GM12878 (cell line): ENCODE measurements at regions of chr15 and their contacts with region 1.

Region 1: DNA sequence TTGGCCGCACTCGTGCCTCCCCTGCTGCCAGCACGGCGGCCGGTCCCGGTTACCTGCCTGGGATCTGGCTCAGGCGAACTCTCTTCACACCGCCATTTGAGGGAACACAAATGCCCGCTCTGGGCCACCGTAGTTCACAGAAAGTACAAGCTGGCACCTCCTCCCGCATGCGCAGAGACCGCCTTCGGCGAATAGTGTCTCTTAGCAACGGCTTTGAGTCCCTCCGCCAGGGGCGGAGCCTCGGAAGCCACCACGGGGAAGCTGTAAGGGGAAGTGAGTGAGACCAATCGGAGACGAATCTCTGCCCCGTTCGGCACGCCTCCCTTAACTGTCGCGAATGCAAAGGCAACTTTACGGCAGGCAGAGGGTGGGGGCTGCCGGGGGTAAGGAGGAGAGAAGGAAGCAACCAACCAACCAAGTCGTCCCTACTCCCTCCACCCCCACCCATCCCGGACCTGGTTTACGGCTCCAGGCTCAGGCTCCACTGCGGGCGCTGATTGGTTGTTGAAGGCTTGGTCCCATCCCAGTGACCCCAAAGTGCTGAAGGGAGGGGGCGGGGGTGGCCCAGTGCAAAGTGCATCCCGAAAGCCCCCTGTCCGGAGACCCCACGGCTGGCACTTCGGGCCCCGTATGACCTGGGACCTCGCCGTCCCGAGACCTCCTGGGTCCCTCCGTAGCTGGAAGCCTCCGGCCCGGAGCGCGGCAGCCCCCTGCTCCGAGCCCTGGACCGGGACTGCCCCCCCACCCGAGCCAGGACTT is at the starts of genes ASB7 and LINS1:
- DNase-seq: peak; percentile 100
- ATAC-seq: peak; percentile 94
- H3K4me3 ChIP-seq: peak within 1 kb of the TSS; percentile 99
- H3K27ac ChIP-seq: peak within 1 kb of the TSS; percentile 83
- H3K4me1 ChIP-seq: peaks cover 15% of the 10 kb centered on the region
- H3K27me3 ChIP-seq: no peaks in the 10 kb centered on the region
- CTCF ChIP-seq: no peak
- EP300 ChIP-seq: no peak
- POLR2A ChIP-seq: no peak; the same call in none of the 2 replicates
- RAD21 ChIP-seq: no peak
- polyA plus RNA-seq, gene ASB7: 2.7 to 2.8 TPM
- polyA plus RNA-seq, gene LINS1: 15.1 to 28.4 TPM

Region 2: GRCh38 chr15:99250494-99251435 is 1351.5 kb before region 1 on chr15:
- CTCF ChIA-PET with region 1: no interaction called
- POLR2A ChIA-PET with region 1: no interaction called
- RAD21 ChIA-PET with region 1: no interaction called
- SMC1A ChIA-PET with region 1: no interaction called
- in situ Hi-C with region 1: loop called (anchors 25 kb)
- intact Hi-C with region 1: no loop called
- DNase-seq: peak; percentile 99
- ATAC-seq: peak; percentile 91
- H3K4me3 ChIP-seq: peak overlapping the region; percentile 75
- H3K27ac ChIP-seq: peak overlapping the region; percentile 84
- H3K4me1 ChIP-seq: peaks cover 11% of the 10 kb centered on the region
- H3K27me3 ChIP-seq: no peaks in the 10 kb centered on the region
- CTCF ChIP-seq: no peak
- EP300 ChIP-seq: no peak
- POLR2A ChIP-seq: peak; percentile 88
- RAD21 ChIP-seq: no peak

Region 3: GRCh38 chr15:100627789-100628395 is 25.6 kb after region 1 on chr15:
- CTCF ChIA-PET with region 1: interaction called, 11 read pairs
- POLR2A ChIA-PET with region 1: no interaction called
- RAD21 ChIA-PET with region 1: interaction called, 5 read pairs
- SMC1A ChIA-PET with region 1: interaction called, 3 read pairs
- in situ Hi-C with region 1: no loop called
- intact Hi-C with region 1: no loop called
- DNase-seq: peak; percentile 43
- ATAC-seq: peak; percentile 92
- H3K4me3 ChIP-seq: no peak overlapping the region
- H3K27ac ChIP-seq: no peak overlapping the region
- H3K4me1 ChIP-seq: no peaks in the 10 kb centered on the region
- H3K27me3 ChIP-seq: no peaks in the 10 kb centered on the region
- CTCF ChIP-seq: peak; percentile 73 to 86 (median 80); a peak in 5 of 6 replicates
- EP300 ChIP-seq: no peak
- POLR2A ChIP-seq: no peak
- RAD21 ChIP-seq: peak; percentile 73

Region 4: GRCh38 chr15:101294731-101295606 is 692.7 kb after region 1 on chr15 and contains the start of gene SNRPA1:
- CTCF ChIA-PET with region 1: no interaction called
- POLR2A ChIA-PET with region 1: no interaction called
- RAD21 ChIA-PET with region 1: no interaction called
- SMC1A ChIA-PET with region 1: no interaction called
- in situ Hi-C with region 1: no loop called
- intact Hi-C with region 1: loop called (anchors 2 kb)
- DNase-seq: peak; percentile 68
- ATAC-seq: peak; percentile 88
- H3K4me3 ChIP-seq: peak within 1 kb of the TSS; percentile 87
- H3K27ac ChIP-seq: peak within 1 kb of the TSS; percentile 95
- H3K4me1 ChIP-seq: peaks cover 8% of the 10 kb centered on the region
- H3K27me3 ChIP-seq: no peaks in the 10 kb centered on the region
- CTCF ChIP-seq: no peak
- EP300 ChIP-seq: 0 out of 4 replicates have a peak, but pooled peaks of 1 of the 2 experiments have one; percentile 7
- POLR2A ChIP-seq: peak; percentile 95
- RAD21 ChIP-seq: no peak
- polyA plus RNA-seq, gene SNRPA1: 174 to 238 TPM

Region 5: DNA sequence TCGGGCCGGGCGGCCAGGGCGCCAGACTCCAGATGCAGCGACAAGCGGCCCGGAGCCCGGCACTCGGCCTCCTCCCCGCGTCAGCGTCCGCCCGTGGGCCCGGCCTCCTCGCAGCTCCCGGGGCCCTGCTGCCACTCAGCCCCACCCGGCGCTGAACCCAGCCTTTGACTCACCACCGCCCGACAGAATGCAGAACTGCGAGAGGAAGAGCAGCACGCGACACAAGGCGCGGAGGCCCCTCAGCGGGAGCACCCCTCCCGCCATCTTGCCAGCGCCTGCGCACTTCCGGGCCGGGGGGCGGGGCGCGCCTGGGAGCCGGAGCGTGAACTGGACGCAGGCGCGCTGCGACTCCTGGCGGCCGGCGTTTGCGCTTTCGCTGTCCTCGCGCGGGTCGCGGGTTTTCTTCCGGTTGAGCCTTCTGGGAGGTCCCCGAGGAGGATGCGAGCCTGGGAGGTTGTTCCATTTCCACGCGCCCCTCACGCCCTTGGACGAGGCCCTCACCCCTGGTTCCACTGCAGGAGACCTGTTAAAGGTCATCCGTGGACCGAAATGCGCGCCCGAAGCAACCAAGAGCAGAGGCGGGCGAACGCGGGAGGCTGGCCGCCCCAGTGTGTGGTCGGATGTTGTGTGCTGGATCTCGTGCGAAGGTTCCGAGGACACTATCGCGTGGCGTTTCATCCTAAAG is 1050.0 kb after region 1 on chr15 and contains the start of gene TM2D3:
- CTCF ChIA-PET with region 1: no interaction called
- POLR2A ChIA-PET with region 1: no interaction called
- RAD21 ChIA-PET with region 1: no interaction called
- SMC1A ChIA-PET with region 1: no interaction called
- in situ Hi-C with region 1: no loop called
- intact Hi-C with region 1: loop called (anchors 5 kb)
- DNase-seq: peak; percentile 65
- ATAC-seq: peak; percentile 94
- H3K4me3 ChIP-seq: peak within 1 kb of the TSS; percentile 85
- H3K27ac ChIP-seq: peak within 1 kb of the TSS; percentile 87
- H3K4me1 ChIP-seq: peaks cover 20% of the 10 kb centered on the region
- H3K27me3 ChIP-seq: no peaks in the 10 kb centered on the region
- CTCF ChIP-seq: peak; percentile 58 to 69 (median 63); a peak in 5 of 6 replicates
- EP300 ChIP-seq: peak in 1 of 2 experiments; percentile 27; a peak in 2 of 4 replicates
- POLR2A ChIP-seq: peak; percentile 98
- RAD21 ChIP-seq: peak; percentile 12; the same call in 1 of the 2 replicates
- polyA plus RNA-seq, gene TM2D3: 48.7 to 71.8 TPM